GM12878 (cell line): ENCODE measurements at regions of chr12 and their contacts with region 1.

Region 1: GRCh38 chr12:4276524-4277204 is 3.1 kb downstream of the CCND2 start:
- DNase-seq: peak; percentile 78
- ATAC-seq: peak; percentile 48
- H3K4me3 ChIP-seq: peak overlapping the region; percentile 99
- H3K27ac ChIP-seq: peak overlapping the region; percentile 2; the same call in 1 of the 2 replicates
- H3K4me1 ChIP-seq: peaks cover 26% of the 10 kb centered on the region
- H3K27me3 ChIP-seq: no peaks in the 10 kb centered on the region
- CTCF ChIP-seq: peak; percentile 84 to 93 (median 85)
- EP300 ChIP-seq: no peak
- POLR2A ChIP-seq: 0 out of 2 replicates have a peak, but pooled peaks have one; percentile 42
- RAD21 ChIP-seq: peak; percentile 100

Region 2: GRCh38 chr12:3658327-3659163 is 618.1 kb before region 1 on chr12:
- CTCF ChIA-PET with region 1: no interaction called
- POLR2A ChIA-PET with region 1: no interaction called
- RAD21 ChIA-PET with region 1: no interaction called
- SMC1A ChIA-PET with region 1: no interaction called
- in situ Hi-C with region 1: no loop called
- intact Hi-C with region 1: no loop called
- DNase-seq: no peak
- ATAC-seq: no peak
- H3K4me3 ChIP-seq: no peak overlapping the region
- H3K27ac ChIP-seq: no peak overlapping the region
- H3K4me1 ChIP-seq: no peaks in the 10 kb centered on the region
- H3K27me3 ChIP-seq: no peaks in the 10 kb centered on the region
- CTCF ChIP-seq: peak; percentile 29 to 32 (median 31); a peak in 4 of 6 replicates
- EP300 ChIP-seq: no peak
- POLR2A ChIP-seq: no peak
- RAD21 ChIP-seq: 0 out of 2 replicates have a peak, but pooled peaks have one; percentile 24

Region 3: DNA sequence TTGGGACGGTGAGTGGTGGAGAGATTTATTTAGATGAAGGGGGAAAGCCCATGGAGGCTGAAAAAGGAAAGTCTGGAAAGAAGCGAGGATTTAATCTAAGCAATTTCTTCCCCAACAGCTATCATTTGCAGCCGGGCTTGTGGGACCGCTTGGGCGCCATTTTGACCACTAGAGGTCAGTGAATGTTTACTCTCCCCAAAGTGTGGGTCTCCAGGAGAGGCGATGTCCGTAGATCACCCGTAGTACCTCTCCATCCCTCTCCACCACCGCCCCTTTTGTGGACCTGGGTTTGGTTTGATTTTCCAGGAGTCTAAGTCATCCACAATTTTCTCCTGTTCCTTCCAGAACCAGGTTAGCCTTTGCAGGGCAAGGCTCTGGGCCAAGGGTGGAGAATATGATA is 312.2 kb before region 1 on chr12:
- CTCF ChIA-PET with region 1: interaction called, 28 read pairs
- POLR2A ChIA-PET with region 1: no interaction called
- RAD21 ChIA-PET with region 1: interaction called, 14 read pairs
- SMC1A ChIA-PET with region 1: interaction called, 15 read pairs
- in situ Hi-C with region 1: no loop called
- intact Hi-C with region 1: loop called (anchors 10 kb)
- DNase-seq: no peak
- ATAC-seq: peak; percentile 91
- H3K4me3 ChIP-seq: no peak overlapping the region
- H3K27ac ChIP-seq: no peak overlapping the region
- H3K4me1 ChIP-seq: no peaks in the 10 kb centered on the region
- H3K27me3 ChIP-seq: peaks cover 0 to 3% of the 10 kb centered on the region in 2 experiments; a peak in 3 of 4 replicates
- CTCF ChIP-seq: peak; percentile 56 to 69 (median 57)
- EP300 ChIP-seq: no peak
- POLR2A ChIP-seq: no peak
- RAD21 ChIP-seq: peak; percentile 42; the same call in 1 of the 2 replicates

Region 4: GRCh38 chr12:4056910-4057845 is 219.5 kb before region 1 on chr12:
- CTCF ChIA-PET with region 1: no interaction called
- POLR2A ChIA-PET with region 1: no interaction called
- RAD21 ChIA-PET with region 1: no interaction called
- SMC1A ChIA-PET with region 1: no interaction called
- in situ Hi-C with region 1: no loop called
- intact Hi-C with region 1: no loop called
- DNase-seq: no peak
- ATAC-seq: no peak
- H3K4me3 ChIP-seq: no peak overlapping the region
- H3K27ac ChIP-seq: no peak overlapping the region
- H3K4me1 ChIP-seq: no peaks in the 10 kb centered on the region
- H3K27me3 ChIP-seq: no peaks in the 10 kb centered on the region; a peak in 1 of 4 replicates
- CTCF ChIP-seq: no peak
- EP300 ChIP-seq: no peak
- POLR2A ChIP-seq: no peak
- RAD21 ChIP-seq: no peak

Region 5: DNA sequence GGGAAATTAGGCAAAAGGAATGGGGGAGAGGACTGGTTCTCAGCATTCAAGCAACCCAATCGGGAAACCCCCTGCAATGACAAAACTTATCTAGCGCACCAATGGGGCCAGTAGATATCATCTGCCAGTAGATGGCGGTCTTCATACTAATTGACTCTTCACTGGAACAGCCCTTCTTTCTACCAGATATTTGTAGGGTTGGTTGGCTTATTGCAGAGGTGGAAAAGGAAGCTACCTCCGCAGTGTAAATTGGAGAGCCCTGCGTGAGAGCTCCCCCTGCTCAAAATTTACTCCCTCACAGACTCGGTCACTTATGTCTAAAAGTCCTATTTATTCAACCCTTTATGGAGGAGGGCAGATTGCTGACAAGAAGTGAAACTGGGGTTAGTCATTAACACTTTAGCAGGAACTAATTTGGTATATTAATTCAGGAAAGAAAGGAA is 169.2 kb before region 1 on chr12:
- CTCF ChIA-PET with region 1: interaction called, 184 read pairs
- POLR2A ChIA-PET with region 1: interaction called, 193 read pairs
- RAD21 ChIA-PET with region 1: interaction called, 129 read pairs
- SMC1A ChIA-PET with region 1: interaction called, 222 read pairs
- in situ Hi-C with region 1: loop called (anchors 5 kb)
- intact Hi-C with region 1: loop called (anchors 1 kb)
- DNase-seq: peak; percentile 86
- ATAC-seq: peak; percentile 94
- H3K4me3 ChIP-seq: no peak overlapping the region
- H3K27ac ChIP-seq: peak overlapping the region; percentile 13; the same call in 1 of the 2 replicates
- H3K4me1 ChIP-seq: peaks cover 24% of the 10 kb centered on the region
- H3K27me3 ChIP-seq: no peaks in the 10 kb centered on the region
- CTCF ChIP-seq: peak; percentile 70 to 86 (median 84)
- EP300 ChIP-seq: no peak; a peak in 1 of 4 replicates
- POLR2A ChIP-seq: no peak
- RAD21 ChIP-seq: peak; percentile 88

Region 6: DNA sequence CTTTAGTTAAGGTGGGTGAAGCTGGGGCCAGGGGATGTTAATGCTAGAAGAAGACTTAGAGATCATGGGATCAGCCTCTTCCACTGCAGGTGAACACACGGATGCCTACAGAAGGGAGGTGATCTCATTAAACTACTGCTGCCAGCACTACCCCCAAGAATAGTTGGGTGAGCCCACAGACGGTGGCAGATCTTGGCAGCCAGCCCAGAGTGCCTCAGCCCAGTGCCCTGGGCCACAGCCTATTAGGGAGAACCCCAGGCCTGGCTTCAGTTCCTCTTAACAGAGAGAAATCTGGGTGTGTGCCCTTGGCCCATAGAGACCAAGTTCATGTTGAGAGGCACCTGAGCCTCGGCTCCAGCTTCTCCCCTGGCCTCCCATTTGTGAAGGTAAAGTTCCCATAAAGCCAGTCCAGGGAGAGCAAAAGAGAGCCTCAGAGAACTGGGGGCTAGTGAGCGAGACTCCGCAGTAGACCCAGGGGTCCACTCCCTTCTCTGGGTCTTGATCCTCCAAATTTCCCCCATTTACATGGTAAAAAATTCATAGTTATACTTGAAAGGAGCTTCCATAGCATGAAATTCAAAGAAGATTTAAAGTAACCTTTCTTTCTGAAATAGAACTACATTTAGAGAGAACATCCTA is 128.1 kb before region 1 on chr12:
- CTCF ChIA-PET with region 1: interaction called, 181 read pairs
- POLR2A ChIA-PET with region 1: interaction called, 180 read pairs
- RAD21 ChIA-PET with region 1: interaction called, 171 read pairs
- SMC1A ChIA-PET with region 1: interaction called, 344 read pairs
- in situ Hi-C with region 1: loop called (anchors 10 kb)
- intact Hi-C with region 1: loop called (anchors 2 kb)
- DNase-seq: peak; percentile 93
- ATAC-seq: peak; percentile 72
- H3K4me3 ChIP-seq: no peak overlapping the region
- H3K27ac ChIP-seq: peak overlapping the region; percentile 72
- H3K4me1 ChIP-seq: peaks cover 77% of the 10 kb centered on the region
- H3K27me3 ChIP-seq: no peaks in the 10 kb centered on the region
- CTCF ChIP-seq: no peak
- EP300 ChIP-seq: peak in 1 of 2 experiments; percentile 74; a peak in 1 of 4 replicates
- POLR2A ChIP-seq: no peak
- RAD21 ChIP-seq: no peak

Region 7: DNA sequence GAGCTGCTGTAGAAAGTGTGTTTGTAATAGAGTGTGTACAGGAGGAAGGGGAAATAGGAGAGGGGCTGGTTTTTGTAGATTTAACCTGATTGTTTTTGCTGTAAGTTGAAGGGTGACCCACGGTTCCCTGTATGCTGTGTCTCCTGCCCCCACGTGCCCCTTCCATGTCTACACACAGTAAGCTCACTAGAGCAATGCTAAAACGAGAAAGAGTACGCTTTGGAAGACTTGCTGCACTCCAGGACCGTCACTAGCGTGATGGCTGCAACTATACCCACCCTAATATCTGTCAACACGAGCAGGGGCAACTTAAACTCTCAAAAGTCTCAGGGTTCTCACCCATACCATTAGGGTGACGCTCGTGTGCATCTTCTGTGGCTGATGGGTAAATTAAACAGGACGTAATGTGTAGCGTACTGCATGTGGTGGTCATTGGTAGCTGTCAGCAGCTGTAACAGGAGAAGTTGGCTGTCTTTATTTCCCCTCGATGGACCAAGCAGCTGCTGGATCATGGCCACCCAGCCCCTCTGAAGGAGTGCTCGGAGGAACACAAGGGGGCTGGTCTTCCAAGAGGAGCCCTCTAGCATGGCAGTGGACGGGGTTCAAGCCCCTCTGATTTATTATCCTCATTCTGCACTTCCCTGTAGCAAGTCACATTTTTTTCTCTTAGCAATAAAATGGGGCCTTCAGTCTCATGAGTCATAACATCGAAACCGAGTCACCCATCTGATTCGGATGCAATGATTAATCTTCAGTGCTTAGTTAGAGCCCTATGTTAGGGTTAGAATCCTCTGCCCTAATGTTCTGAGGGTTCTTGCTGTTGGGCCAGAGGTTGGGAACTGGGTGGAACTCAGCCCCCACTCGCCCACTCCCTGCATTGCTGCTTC is 10.9 kb after region 1 on chr12:
- CTCF ChIA-PET with region 1: interaction called, 8 read pairs
- POLR2A ChIA-PET with region 1: interaction called, 6 read pairs
- RAD21 ChIA-PET with region 1: interaction called, 12 read pairs
- SMC1A ChIA-PET with region 1: interaction called, 8 read pairs
- in situ Hi-C with region 1: no loop called
- intact Hi-C with region 1: no loop called
- DNase-seq: no peak
- ATAC-seq: no peak
- H3K4me3 ChIP-seq: no peak overlapping the region
- H3K27ac ChIP-seq: no peak overlapping the region
- H3K4me1 ChIP-seq: peaks cover 12% of the 10 kb centered on the region
- H3K27me3 ChIP-seq: no peaks in the 10 kb centered on the region
- CTCF ChIP-seq: no peak
- EP300 ChIP-seq: no peak
- POLR2A ChIP-seq: no peak; the same call in 1 of the 2 replicates
- RAD21 ChIP-seq: no peak